ENCODE measurements at regions of chr2 and their contacts with region 1.

Region 1: GRCh38 chr2:11129598-11130449 is 25.4 kb upstream of the SLC66A3 start:
- DNase-seq: no peak
- H3K4me3 ChIP-seq: peak overlapping the region; percentile 39
- H3K27ac ChIP-seq: no peak overlapping the region
- H3K27me3 ChIP-seq: no peaks in the 10 kb centered on the region
- CTCF ChIP-seq: peak; percentile 15; the same call in 1 of the 2 replicates

Region 2: DNA sequence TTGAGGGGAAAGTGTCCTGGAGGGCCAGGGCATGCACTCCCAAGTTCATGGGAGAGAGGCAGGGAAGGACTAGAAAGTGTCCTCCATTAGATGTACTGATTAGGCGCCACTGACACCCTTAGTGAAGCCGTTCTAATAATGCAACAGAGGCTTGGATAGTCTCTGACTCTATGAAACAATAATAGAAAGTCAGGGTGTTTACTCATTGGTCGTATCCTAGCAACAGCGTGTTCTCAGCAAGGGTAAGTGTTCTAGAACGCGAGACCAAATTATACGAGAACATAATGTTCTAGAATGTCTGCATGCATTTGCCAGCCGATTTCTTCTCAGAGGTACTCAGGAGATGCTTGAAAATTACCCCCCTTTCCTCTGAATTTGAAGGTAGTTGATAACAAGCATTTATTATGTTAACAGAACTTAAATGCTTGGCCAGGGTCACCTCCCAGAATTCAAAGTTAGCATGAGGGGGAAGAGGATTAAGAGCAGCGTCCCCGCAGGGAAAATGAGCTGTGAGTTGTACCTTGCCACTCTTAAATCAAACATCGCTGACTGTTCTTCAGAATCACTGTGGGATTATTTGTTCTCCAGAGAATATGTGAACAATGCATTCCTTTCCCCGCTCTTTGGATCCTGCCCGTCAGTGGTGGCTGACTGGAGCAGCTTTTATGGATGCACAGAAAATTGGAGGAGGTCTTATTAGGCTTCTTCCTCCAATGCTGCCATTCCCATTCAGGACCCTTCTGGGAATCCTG is 283.5 kb before region 1 on chr2:
- CTCF ChIA-PET with region 1: interaction called, 12 read pairs
- POLR2A ChIA-PET with region 1: no interaction called
- DNase-seq: no peak
- H3K4me3 ChIP-seq: no peak overlapping the region
- H3K27ac ChIP-seq: no peak overlapping the region
- H3K27me3 ChIP-seq: peaks cover 8% of the 10 kb centered on the region
- CTCF ChIP-seq: no peak

Region 3: GRCh38 chr2:11097038-11097720 is 32.6 kb before region 1 on chr2:
- CTCF ChIA-PET with region 1: no interaction called
- POLR2A ChIA-PET with region 1: no interaction called
- DNase-seq: peak; percentile 47
- H3K4me3 ChIP-seq: no peak overlapping the region
- H3K27ac ChIP-seq: peak overlapping the region; percentile 39
- H3K27me3 ChIP-seq: peaks cover 3% of the 10 kb centered on the region
- CTCF ChIP-seq: no peak

Region 4: DNA sequence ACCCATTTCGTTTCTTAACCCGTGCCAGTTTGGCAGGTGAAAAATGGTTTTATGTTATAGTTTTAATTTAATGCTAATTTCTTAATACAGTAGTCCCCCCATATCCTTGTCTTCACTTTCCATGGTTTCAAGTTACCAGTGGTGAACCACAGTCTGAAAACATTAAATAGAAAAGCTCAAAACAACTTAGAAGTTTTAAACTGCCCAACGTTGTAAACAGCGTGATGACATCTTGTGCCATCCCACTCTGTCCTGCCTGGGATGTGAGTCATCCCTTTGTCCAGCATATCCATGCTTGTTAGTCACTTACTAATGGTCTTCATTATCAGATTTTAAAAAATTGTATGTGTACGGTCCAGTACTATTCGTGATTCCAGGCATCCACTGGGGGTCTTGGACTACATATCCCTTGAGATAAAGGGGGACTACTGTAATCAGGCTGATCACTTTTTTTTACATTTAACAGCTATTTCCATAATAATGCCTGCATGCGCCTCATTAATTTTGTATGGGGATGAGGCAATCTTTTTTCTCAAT is 57.3 kb after region 1 on chr2:
- CTCF ChIA-PET with region 1: interaction called, 17 read pairs
- POLR2A ChIA-PET with region 1: no interaction called
- DNase-seq: peak; percentile 27
- H3K4me3 ChIP-seq: no peak overlapping the region
- H3K27ac ChIP-seq: no peak overlapping the region
- H3K27me3 ChIP-seq: no peaks in the 10 kb centered on the region
- CTCF ChIP-seq: no peak

Region 5: GRCh38 chr2:11220445-11220844 is 90.6 kb after region 1 on chr2:
- CTCF ChIA-PET with region 1: interaction called, 26 read pairs
- POLR2A ChIA-PET with region 1: no interaction called
- DNase-seq: no peak
- H3K4me3 ChIP-seq: no peak overlapping the region
- H3K27ac ChIP-seq: no peak overlapping the region
- H3K27me3 ChIP-seq: no peaks in the 10 kb centered on the region
- CTCF ChIP-seq: no peak

Region 6: GRCh38 chr2:11333427-11334183 is 203.8 kb after region 1 on chr2:
- CTCF ChIA-PET with region 1: no interaction called
- POLR2A ChIA-PET with region 1: no interaction called
- DNase-seq: no peak
- H3K4me3 ChIP-seq: no peak overlapping the region
- H3K27ac ChIP-seq: no peak overlapping the region
- H3K27me3 ChIP-seq: no peaks in the 10 kb centered on the region
- CTCF ChIP-seq: no peak

Region 7: DNA sequence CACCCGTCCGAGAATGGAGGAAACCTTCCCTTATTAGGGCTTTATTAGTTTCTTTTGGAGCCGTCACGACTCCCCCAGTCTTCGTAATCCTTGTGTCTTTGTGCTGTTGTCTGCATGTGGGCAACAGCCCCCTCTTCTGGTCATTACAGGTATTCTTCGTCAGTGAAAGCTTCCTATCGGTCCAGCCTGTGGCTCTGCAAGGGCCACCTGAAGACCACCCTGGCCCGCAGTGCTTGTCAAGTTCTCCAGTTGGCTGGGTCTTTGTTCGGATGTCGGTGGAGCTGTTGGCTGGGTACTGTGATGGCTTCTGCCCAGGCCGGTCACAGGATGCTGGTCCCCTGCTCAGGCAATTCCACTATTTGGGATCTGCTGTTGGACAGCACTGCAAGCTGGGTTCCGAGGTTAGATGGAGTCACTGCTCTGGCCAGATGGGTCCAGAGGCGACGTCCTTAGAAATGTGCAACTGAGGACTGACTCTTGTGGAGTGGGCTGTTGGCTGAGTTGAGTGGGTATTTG is 317.0 kb after region 1 on chr2:
- CTCF ChIA-PET with region 1: interaction called, 62 read pairs
- POLR2A ChIA-PET with region 1: interaction called, 5 read pairs
- DNase-seq: peak; percentile 33
- H3K4me3 ChIP-seq: no peak overlapping the region
- H3K27ac ChIP-seq: no peak overlapping the region
- H3K27me3 ChIP-seq: no peaks in the 10 kb centered on the region
- CTCF ChIP-seq: peak; percentile 79

Region 8: DNA sequence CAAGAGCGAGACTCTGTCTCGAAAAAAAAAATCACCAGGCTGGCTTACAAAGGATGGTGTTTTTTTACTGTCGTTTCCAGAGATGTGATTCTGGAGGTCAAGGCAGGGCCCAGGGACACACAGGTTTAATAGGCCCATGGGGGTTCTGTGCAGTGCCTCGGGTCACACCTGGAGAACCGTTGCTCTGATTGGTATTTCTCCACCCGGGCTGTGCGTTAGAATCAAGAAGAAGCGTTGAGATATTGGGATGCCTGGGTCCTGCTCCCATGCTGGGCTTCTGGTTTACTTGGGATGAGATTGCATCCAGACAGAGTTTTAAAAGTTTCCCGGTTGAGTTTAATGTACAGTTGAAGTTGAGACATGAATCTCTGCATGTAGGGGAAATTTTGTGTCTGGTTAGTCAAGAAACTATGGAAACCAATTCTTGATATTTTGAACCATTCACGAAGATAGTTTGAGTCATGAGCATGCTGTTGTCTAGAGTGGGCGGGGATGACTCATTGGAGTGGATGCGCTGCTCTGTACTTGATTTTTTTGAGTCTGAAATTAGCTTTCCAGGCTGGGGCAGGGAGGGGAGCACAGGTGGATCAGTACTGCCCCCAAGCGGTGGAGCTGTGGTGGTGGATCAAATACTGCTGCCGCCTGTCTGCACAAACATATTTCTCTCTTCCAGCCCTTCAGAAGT is 454.2 kb after region 1 on chr2:
- CTCF ChIA-PET with region 1: interaction called, 125 read pairs
- POLR2A ChIA-PET with region 1: interaction called, 7 read pairs
- DNase-seq: peak; percentile 90
- H3K4me3 ChIP-seq: no peak overlapping the region
- H3K27ac ChIP-seq: peak overlapping the region; percentile 68
- H3K27me3 ChIP-seq: peaks cover 21% of the 10 kb centered on the region
- CTCF ChIP-seq: peak; percentile 95

Measured in AG04450 (cell line).